Activated T-helper 2 cell treated with anti-CD3 and anti-CD28 coated beads, Interferon-gamma antibody, Interleukin-2, Interleukin-4, amounts not matched to agents 10 μg/mL and 5 μg/mL and 100 μg/mL, durations not matched to agents 14 hours and 24 hours and 36 hours (primary cell): ENCODE measurements at regions of chr11 and their contacts with region 1.

Region 1: DNA sequence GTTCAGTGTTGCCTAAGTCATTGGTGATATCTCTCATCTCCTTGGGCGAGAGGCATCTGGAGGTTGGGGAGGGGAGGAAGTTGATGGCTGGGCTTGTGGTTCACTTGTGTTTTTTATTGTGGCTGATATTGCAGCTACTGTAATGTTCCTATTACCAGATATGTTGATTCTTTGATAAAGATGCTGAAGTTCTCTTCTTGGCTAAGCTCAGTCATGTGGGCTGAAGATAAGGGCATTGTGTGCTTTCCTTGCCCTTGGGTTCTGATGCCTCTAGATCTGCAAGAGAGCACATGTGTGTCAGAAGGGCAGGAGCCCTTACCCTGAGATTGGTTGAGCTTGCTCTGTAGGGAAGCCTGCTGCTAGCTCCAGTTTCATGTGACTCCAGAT is 12.0 kb downstream of the STX3 start:
- DNase-seq: peak; percentile 48
- H3K4me3 Mint-ChIP-seq: no peak overlapping the region
- H3K27ac Mint-ChIP-seq: peak overlapping the region; percentile 53
- H3K4me1 Mint-ChIP-seq: peaks cover 24% of the 10 kb centered on the region
- H3K27me3 Mint-ChIP-seq: peaks cover 14% of the 10 kb centered on the region

Region 2: DNA sequence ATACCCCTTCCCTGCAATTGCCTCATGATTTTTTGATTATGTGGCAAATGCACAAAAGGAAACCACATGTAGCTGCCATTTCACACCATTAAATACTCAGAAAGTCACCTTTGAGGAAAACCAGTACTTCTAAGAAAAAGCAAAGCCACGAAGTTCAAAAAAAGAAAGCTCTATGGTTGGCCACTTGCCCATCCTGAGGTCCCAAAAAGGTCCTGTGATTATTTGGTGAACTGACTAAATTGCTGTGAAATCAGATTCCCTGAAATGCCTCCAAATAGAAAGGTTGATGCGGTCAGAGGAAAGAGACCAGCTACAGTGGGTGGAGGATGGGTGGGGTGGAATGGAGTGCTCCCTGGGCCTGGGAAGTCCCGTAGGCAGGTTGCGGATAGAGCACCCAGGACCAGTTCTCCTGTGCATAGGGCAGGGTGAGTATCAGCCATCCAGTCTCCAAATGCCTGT is 16.4 kb after region 1 on chr11:
- intact Hi-C with region 1: loop called (anchors 2 kb)
- DNase-seq: no peak
- H3K4me3 Mint-ChIP-seq: no peak overlapping the region
- H3K27ac Mint-ChIP-seq: no peak overlapping the region
- H3K4me1 Mint-ChIP-seq: peaks cover 40% of the 10 kb centered on the region
- H3K27me3 Mint-ChIP-seq: no peaks in the 10 kb centered on the region